Activated CD4-positive, alpha-beta memory T cell treated with anti-CD3 and anti-CD28 coated beads for 36 hours (primary cell): ENCODE measurements at regions of chr4 and their contacts with region 1.

Region 1: GRCh38 chr4:15427161-15427560 is 672 bp upstream of the C1QTNF7 start:
- DNase-seq: no peak
- H3K4me3 Mint-ChIP-seq: no peak overlapping the region
- H3K27ac Mint-ChIP-seq: no peak overlapping the region
- H3K4me1 Mint-ChIP-seq: peaks cover 32% of the 10 kb centered on the region
- H3K27me3 Mint-ChIP-seq: peaks cover 1% of the 10 kb centered on the region

Region 2: GRCh38 chr4:15231265-15232091 is 195.7 kb before region 1 on chr4:
- CTCF ChIA-PET with region 1: no interaction called
- POLR2A ChIA-PET with region 1: no interaction called
- intact Hi-C with region 1: loop called (anchors 1 kb)
- DNase-seq: peak; percentile 81
- H3K4me3 Mint-ChIP-seq: no peak overlapping the region
- H3K27ac Mint-ChIP-seq: no peak overlapping the region
- H3K4me1 Mint-ChIP-seq: peaks cover 28% of the 10 kb centered on the region
- H3K27me3 Mint-ChIP-seq: no peaks in the 10 kb centered on the region

Region 3: DNA sequence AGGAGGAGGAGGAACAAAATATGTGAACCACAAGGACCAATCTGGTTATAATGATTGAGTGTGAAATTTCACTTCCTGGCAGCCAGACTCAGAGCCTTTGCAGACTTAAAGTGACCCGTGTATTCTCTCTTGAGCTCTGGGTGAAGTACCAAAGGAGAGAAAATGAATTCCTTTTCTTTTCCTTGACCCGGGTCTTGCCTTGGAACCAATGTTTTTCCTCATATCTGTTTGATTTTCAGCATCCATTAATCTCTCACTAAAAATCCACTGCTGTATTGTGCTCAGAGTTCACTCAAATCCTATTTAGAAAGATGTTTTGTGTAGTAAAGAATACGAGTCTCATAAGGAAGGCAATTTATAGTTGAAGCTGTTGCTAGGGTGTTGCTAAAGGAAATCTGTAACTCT is 77.6 kb before region 1 on chr4:
- CTCF ChIA-PET with region 1: no interaction called
- POLR2A ChIA-PET with region 1: no interaction called
- intact Hi-C with region 1: no loop called
- DNase-seq: no peak
- H3K4me3 Mint-ChIP-seq: no peak overlapping the region
- H3K27ac Mint-ChIP-seq: no peak overlapping the region
- H3K4me1 Mint-ChIP-seq: peaks cover 2% of the 10 kb centered on the region
- H3K27me3 Mint-ChIP-seq: peaks cover 4% of the 10 kb centered on the region